Calu3 (cell line): ENCODE measurements at regions of chr13 and their contacts with region 1.

Region 1: GRCh38 chr13:30978981-30979956 is 46.8 kb downstream of the TEX26 start:
- DNase-seq: peak; percentile 28
- H3K4me3 Mint-ChIP-seq: no peak overlapping the region
- H3K27ac Mint-ChIP-seq: no peak overlapping the region
- H3K4me1 Mint-ChIP-seq: peaks cover 23% of the 10 kb centered on the region
- H3K27me3 Mint-ChIP-seq: no peaks in the 10 kb centered on the region
- CTCF ChIP-seq: peak; percentile 41

Region 2: GRCh38 chr13:30927595-30927994 is 51.7 kb before region 1 on chr13:
- CTCF ChIA-PET with region 1: no interaction called
- intact Hi-C with region 1: loop called (anchors 10 kb)
- DNase-seq: no peak
- H3K4me3 Mint-ChIP-seq: no peak overlapping the region
- H3K27ac Mint-ChIP-seq: peak overlapping the region; percentile 62
- H3K4me1 Mint-ChIP-seq: peaks cover 32% of the 10 kb centered on the region
- H3K27me3 Mint-ChIP-seq: no peaks in the 10 kb centered on the region
- CTCF ChIP-seq: no peak